Activated CD4-positive, alpha-beta T cell treated with anti-CD3 and anti-CD28 coated beads, Interleukin-2, amount 10 ng/mL, durations not matched to agents 24 days and 14 days (primary cell): ENCODE measurements at regions of chr14 and their contacts with region 1.

Region 1: GRCh38 chr14:61750708-61751474 is 11.3 kb upstream of the SNAPC1 start:
- DNase-seq: peak; percentile 97
- H3K4me3 Mint-ChIP-seq: peak overlapping the region; percentile 98
- H3K27ac Mint-ChIP-seq: peak overlapping the region; percentile 94
- H3K4me1 Mint-ChIP-seq: peaks cover 49% of the 10 kb centered on the region
- H3K27me3 Mint-ChIP-seq: no peaks in the 10 kb centered on the region

Region 2: DNA sequence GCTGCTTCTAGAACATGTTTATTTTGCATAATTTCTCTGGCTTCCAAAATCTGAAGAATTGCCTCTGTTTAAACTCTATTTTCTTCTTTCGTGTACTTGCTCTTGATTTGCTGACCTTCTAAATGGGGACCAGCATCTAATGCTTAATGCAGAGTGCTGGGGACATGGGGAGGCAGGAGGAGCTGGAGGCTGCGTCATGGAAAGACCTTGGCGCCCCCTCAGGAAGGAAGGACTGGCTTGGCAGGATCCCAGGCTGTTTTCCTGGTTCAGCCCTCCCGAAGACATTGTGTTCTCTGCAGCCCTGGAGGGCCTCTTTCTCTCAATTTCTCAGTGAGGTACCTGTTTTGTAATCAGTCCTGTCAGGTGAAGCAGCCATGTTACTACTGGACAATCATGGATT is 424.0 kb before region 1 on chr14:
- intact Hi-C with region 1: loop called (anchors 5 kb)
- DNase-seq: peak; percentile 69
- H3K4me3 Mint-ChIP-seq: peak overlapping the region; percentile 87
- H3K27ac Mint-ChIP-seq: peak overlapping the region; percentile 90
- H3K4me1 Mint-ChIP-seq: peaks cover 59% of the 10 kb centered on the region
- H3K27me3 Mint-ChIP-seq: no peaks in the 10 kb centered on the region

Region 3: GRCh38 chr14:61761959-61762786 is 11.3 kb after region 1 on chr14 and contains the start of gene SNAPC1:
- intact Hi-C with region 1: loop called (anchors 1 kb)
- DNase-seq: peak; percentile 100
- H3K4me3 Mint-ChIP-seq: peak within 1 kb of the TSS; percentile 88
- H3K27ac Mint-ChIP-seq: peak within 1 kb of the TSS; percentile 97
- H3K4me1 Mint-ChIP-seq: peaks cover 40% of the 10 kb centered on the region
- H3K27me3 Mint-ChIP-seq: no peaks in the 10 kb centered on the region
- total RNA-seq, gene SNAPC1: 12.1 and 12.3 TPM in 2 replicates